ENCODE measurements at regions of chr11 and their contacts with region 1.

Region 1: DNA sequence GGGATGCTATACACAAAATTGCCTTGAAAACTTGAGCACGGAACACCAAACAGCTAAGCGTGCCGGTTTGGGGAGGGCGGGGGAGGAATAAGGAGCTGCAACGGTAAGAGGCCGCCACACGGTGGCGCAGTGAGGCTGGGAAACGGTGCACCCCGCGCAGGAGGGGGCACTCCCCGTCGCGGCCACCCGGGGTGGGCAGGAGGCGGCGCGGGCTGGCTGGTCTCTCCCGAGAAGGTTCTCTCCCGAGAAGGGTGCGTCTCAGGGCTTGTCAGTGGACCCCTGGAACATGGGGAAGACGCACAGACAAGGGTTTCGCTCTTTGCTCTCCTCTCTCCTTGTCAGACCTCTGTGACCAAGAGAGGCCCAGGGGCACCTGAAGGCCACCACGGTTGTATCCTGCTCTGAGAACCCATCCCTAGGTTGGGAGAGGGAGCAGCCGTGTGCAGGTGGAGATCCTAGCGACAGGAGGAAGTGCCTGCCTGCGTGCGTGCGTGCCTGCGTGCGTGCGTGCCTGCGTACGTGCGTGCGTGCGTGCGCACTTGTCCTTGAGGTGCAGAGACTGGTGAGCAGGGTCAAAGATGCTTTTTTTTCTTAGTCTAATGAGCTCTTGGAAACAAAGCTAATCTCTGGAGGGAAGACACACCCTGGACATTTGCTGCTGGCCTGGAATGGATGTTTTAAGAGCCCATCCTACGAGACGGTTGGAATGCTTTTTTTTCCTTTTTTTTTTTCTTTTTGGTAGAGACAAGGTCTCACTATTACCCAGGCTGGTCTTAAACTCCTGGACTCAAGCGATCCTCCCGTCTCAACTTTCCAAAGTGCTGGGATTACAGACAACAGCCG is 18.1 kb upstream of the JAM3 start:
- DNase-seq: peak in 1 of 2 experiments; percentile 85
- H3K4me3 ChIP-seq: peak overlapping the region in 1 of 4 experiments; percentile 26; a peak in 3 of 8 replicates
- H3K27ac ChIP-seq: no peak overlapping the region
- H3K4me1 ChIP-seq: peaks cover 1 to 14% (median 7%) of the 10 kb centered on the region in 4 experiments; a peak in 6 of 7 replicates
- H3K27me3 ChIP-seq: no peaks in the 10 kb centered on the region; a peak in 2 of 7 replicates
- CTCF ChIP-seq: peak; percentile 83 to 95 (median 92)
- EP300 ChIP-seq: no peak
- POLR2A ChIP-seq: no peak
- RAD21 ChIP-seq: peak; percentile 85 to 90

Region 2: GRCh38 chr11:133934599-133935550 is 115.9 kb before region 1 on chr11:
- CTCF ChIA-PET with region 1: interaction called, 13 read pairs
- POLR2A ChIA-PET with region 1: no interaction called
- DNase-seq: no peak
- H3K4me3 ChIP-seq: no peak overlapping the region
- H3K27ac ChIP-seq: no peak overlapping the region
- H3K4me1 ChIP-seq: no peaks in the 10 kb centered on the region
- H3K27me3 ChIP-seq: no peaks in the 10 kb centered on the region
- CTCF ChIP-seq: no peak
- EP300 ChIP-seq: no peak
- POLR2A ChIP-seq: no peak
- RAD21 ChIP-seq: no peak

Region 3: GRCh38 chr11:134024420-134025081 is 26.2 kb before region 1 on chr11:
- CTCF ChIA-PET with region 1: interaction called, 178 read pairs
- POLR2A ChIA-PET with region 1: no interaction called
- DNase-seq: no peak
- H3K4me3 ChIP-seq: no peak overlapping the region
- H3K27ac ChIP-seq: no peak overlapping the region
- H3K4me1 ChIP-seq: peaks cover 0 to 9% (median 2%) of the 10 kb centered on the region in 4 experiments; a peak in 3 of 7 replicates
- H3K27me3 ChIP-seq: no peaks in the 10 kb centered on the region
- CTCF ChIP-seq: no peak
- EP300 ChIP-seq: no peak
- POLR2A ChIP-seq: no peak
- RAD21 ChIP-seq: no peak

Region 4: GRCh38 chr11:134068829-134069425 is 18.2 kb after region 1 on chr11 and contains the start of gene JAM3:
- CTCF ChIA-PET with region 1: interaction called, 49 read pairs
- POLR2A ChIA-PET with region 1: interaction called, 4 read pairs
- DNase-seq: peak; percentile 81 to 99
- H3K4me3 ChIP-seq: peak within 1 kb of the TSS; percentile 74 to 97 (median 86)
- H3K27ac ChIP-seq: 0 out of 2 replicates have a peak within 1 kb of the TSS, but pooled peaks have one; percentile 51
- H3K4me1 ChIP-seq: peaks cover 0 to 9% (median 2%) of the 10 kb centered on the region in 4 experiments; a peak in 3 of 7 replicates
- H3K27me3 ChIP-seq: peaks cover 0 to 2% (median 0%) of the 10 kb centered on the region in 4 experiments; a peak in 3 of 7 replicates
- CTCF ChIP-seq: no peak
- EP300 ChIP-seq: no peak
- POLR2A ChIP-seq: no peak; a peak in 1 of 3 replicates
- RAD21 ChIP-seq: no peak
- total RNA-seq, gene JAM3: 40.3 and 42.8 TPM in 2 replicates

Region 5: GRCh38 chr11:134124660-134125451 is 74.1 kb after region 1 on chr11:
- CTCF ChIA-PET with region 1: interaction called, 18 read pairs
- POLR2A ChIA-PET with region 1: no interaction called
- DNase-seq: peak in 1 of 2 experiments; percentile 73
- H3K4me3 ChIP-seq: peak overlapping the region; percentile 29 to 54 (median 32); a peak in 7 of 8 replicates
- H3K27ac ChIP-seq: no peak overlapping the region
- H3K4me1 ChIP-seq: peaks cover 0 to 16% (median 12%) of the 10 kb centered on the region in 4 experiments; a peak in 5 of 7 replicates
- H3K27me3 ChIP-seq: peaks cover 0 to 10% (median 5%) of the 10 kb centered on the region in 4 experiments; a peak in 3 of 7 replicates
- CTCF ChIP-seq: no peak
- EP300 ChIP-seq: no peak
- POLR2A ChIP-seq: no peak
- RAD21 ChIP-seq: no peak; a peak in 1 of 4 replicates

Measured in H1 (cell line).